Activated CD4-positive, alpha-beta T cell treated with anti-CD3 and anti-CD28 coated beads for 36 hours (primary cell): ENCODE measurements at regions of chr6 and their contacts with region 1.

Region 1: DNA sequence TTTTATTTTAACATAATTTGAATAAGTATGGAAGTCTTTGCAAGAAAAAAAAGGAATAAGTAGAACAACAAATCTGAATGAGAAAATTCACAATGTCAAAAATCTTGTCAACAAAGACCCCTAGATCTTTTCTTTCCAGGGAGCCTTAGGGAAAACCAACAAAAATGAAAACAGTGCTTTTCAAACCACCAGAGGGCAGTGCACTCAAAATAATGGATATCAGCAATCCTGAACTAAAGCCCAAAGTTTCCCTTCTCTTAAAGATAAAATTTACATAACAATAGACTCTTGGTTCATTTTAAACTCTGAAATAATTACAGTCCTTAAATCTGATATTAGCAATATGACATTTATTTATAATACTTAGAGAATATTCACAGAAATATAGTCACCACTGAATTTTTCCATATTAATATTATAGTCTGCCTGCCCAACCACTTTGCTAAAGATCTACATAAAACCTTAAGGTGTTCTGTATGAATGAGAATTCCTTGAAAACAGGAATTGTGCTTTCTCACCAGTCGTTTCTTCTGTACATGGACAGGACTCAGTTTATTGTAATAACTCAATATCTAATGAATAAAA is 105.3 kb upstream of the BMP5 start:
- DNase-seq: peak; percentile 9
- ATAC-seq: no peak
- H3K4me3 Mint-ChIP-seq: no peak overlapping the region
- H3K27ac Mint-ChIP-seq: no peak overlapping the region
- H3K4me1 Mint-ChIP-seq: no peaks in the 10 kb centered on the region
- H3K27me3 Mint-ChIP-seq: no peaks in the 10 kb centered on the region

Region 2: DNA sequence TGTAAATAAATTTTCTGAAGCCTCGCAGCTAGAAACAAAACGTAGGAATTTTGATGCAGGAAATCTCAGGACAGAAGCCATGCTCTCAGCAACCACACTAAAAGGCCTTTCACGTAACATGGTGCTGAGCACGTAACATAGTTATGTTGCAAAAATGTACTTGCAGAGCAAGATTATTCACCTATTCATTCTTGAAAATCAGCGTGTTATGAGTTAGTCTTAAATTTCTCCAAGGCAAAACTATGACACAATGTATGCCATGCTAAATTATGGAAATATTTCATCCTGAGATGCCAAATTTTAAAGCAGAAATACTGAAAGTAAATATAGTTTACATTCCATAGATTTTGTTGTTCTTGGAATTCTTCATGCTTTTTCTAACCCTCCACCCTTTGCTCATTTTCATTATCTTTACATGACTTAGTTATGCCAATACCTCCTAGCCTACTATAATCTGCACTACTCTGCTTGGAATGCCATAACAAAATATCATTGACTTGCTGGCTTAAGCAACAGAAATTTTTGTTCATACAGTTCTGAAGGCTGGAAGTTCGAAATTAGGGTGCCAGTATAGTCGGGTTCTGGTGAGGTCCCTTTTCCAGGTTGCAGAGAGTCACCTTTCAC is 74.5 kb after region 1 on chr6:
- CTCF ChIA-PET with region 1: no interaction called
- POLR2A ChIA-PET with region 1: no interaction called
- intact Hi-C with region 1: loop called in 1 of 2 experiments (anchors 2 kb)
- DNase-seq: no peak
- ATAC-seq: no peak
- H3K4me3 Mint-ChIP-seq: no peak overlapping the region
- H3K27ac Mint-ChIP-seq: no peak overlapping the region
- H3K4me1 Mint-ChIP-seq: no peaks in the 10 kb centered on the region
- H3K27me3 Mint-ChIP-seq: no peaks in the 10 kb centered on the region